ENCODE measurements at regions of chr1 and their contacts with region 1.

Region 1: GRCh38 chr1:26169669-26170471 is at the start of gene ZNF593:
- DNase-seq: peak; percentile 52 to 92 (median 69)
- ATAC-seq: peak; percentile 96
- H3K4me3 ChIP-seq: peak within 1 kb of the TSS; percentile 72
- H3K4me3 Mint-ChIP-seq: peak within 1 kb of the TSS; percentile 83 to 90 (median 88)
- H3K27ac ChIP-seq: peak within 1 kb of the TSS; percentile 86
- H3K27ac Mint-ChIP-seq: peak within 1 kb of the TSS; percentile 48 to 91 (median 77)
- H3K4me1 ChIP-seq: peaks cover 7 to 10% of the 10 kb centered on the region in 2 donors
- H3K4me1 Mint-ChIP-seq: peaks cover 0 to 33% (median 15%) of the 10 kb centered on the region in 7 donors
- H3K27me3 ChIP-seq: no peaks in the 10 kb centered on the region
- H3K27me3 Mint-ChIP-seq: peaks cover 0 to 21% (median 0%) of the 10 kb centered on the region in 5 donors
- total RNA-seq, gene ZNF593: 7.8 to 36.3 (median 9.6) TPM

Region 2: GRCh38 chr1:25167331-25168199 is 1002.3 kb before region 1 on chr1:
- CTCF ChIA-PET with region 1: no interaction called
- POLR2A ChIA-PET with region 1: no interaction called
- intact Hi-C with region 1: no loop called
- DNase-seq: no peak
- ATAC-seq: no peak
- H3K4me3 ChIP-seq: no peak overlapping the region
- H3K4me3 Mint-ChIP-seq: no peak overlapping the region
- H3K27ac ChIP-seq: no peak overlapping the region
- H3K27ac Mint-ChIP-seq: no peak overlapping the region
- H3K4me1 ChIP-seq: no peaks in the 10 kb centered on the region
- H3K4me1 Mint-ChIP-seq: peaks cover 0 to 6% (median 2%) of the 10 kb centered on the region in 7 donors
- H3K27me3 ChIP-seq: no peaks in the 10 kb centered on the region
- H3K27me3 Mint-ChIP-seq: peaks cover 0 to 8% (median 0%) of the 10 kb centered on the region in 5 donors

Region 3: GRCh38 chr1:26111530-26112406 is 58.1 kb before region 1 on chr1 and contains the start of gene PDIK1L:
- CTCF ChIA-PET with region 1: interaction called, 4 read pairs
- POLR2A ChIA-PET with region 1: no interaction called
- intact Hi-C with region 1: loop called in 1 of 2 experiments (anchors 2 kb)
- DNase-seq: peak; percentile 91 to 95 (median 94)
- ATAC-seq: peak; percentile 93
- H3K4me3 ChIP-seq: peak within 1 kb of the TSS; percentile 93
- H3K4me3 Mint-ChIP-seq: peak within 1 kb of the TSS; percentile 86 to 99 (median 93)
- H3K27ac ChIP-seq: peak within 1 kb of the TSS; percentile 84
- H3K27ac Mint-ChIP-seq: peak within 1 kb of the TSS; percentile 84 to 98 (median 92)
- H3K4me1 ChIP-seq: peaks cover 12 to 19% of the 10 kb centered on the region in 2 donors
- H3K4me1 Mint-ChIP-seq: peaks cover 6 to 44% (median 34%) of the 10 kb centered on the region in 7 donors
- H3K27me3 ChIP-seq: no peaks in the 10 kb centered on the region
- H3K27me3 Mint-ChIP-seq: no peaks in the 10 kb centered on the region
- total RNA-seq, gene PDIK1L: 9.1 to 29.6 (median 20.3) TPM

Region 4: DNA sequence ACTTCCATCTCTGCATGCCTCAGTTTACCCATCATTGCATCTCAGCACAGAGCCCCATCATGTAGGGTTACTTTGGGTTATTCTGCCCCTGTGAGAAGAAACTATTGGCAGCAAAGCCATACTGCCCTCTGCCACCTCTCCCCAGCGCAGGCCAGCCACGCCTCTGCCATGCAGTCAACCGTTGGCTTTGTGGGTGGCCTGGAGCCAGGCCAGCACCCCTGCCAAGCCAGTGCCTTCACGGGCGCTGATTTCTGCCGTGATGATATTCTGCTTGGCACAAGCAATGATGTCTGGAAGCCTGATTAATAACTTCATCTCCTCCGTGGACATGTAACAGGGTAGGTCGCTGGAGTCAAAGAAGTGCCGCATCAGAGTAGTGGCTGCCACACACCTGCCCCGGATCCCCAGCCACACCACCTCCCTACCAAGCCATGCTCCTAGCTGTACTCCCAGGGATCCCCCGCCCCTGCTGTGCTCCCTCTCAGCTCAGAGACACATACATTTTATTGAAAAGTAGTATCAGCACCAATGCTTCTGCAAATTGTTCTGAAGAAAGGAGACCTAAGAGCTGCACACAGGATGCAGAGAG is 49.1 kb after region 1 on chr1:
- CTCF ChIA-PET with region 1: no interaction called
- POLR2A ChIA-PET with region 1: no interaction called
- intact Hi-C with region 1: no loop called
- DNase-seq: no peak
- ATAC-seq: no peak
- H3K4me3 ChIP-seq: no peak overlapping the region
- H3K4me3 Mint-ChIP-seq: no peak overlapping the region
- H3K27ac ChIP-seq: no peak overlapping the region
- H3K27ac Mint-ChIP-seq: no peak overlapping the region
- H3K4me1 ChIP-seq: no peaks in the 10 kb centered on the region
- H3K4me1 Mint-ChIP-seq: peaks cover 0 to 2% (median 0%) of the 10 kb centered on the region in 7 donors
- H3K27me3 ChIP-seq: no peaks in the 10 kb centered on the region
- H3K27me3 Mint-ChIP-seq: peaks cover 0 to 19% (median 0%) of the 10 kb centered on the region in 5 donors

Measured in naive thymus-derived CD4-positive, alpha-beta T cell (primary cell).